Common myeloid progenitor, CD34-positive (primary cell): ENCODE measurements at regions of chr7 and their contacts with region 1.

Region 1: DNA sequence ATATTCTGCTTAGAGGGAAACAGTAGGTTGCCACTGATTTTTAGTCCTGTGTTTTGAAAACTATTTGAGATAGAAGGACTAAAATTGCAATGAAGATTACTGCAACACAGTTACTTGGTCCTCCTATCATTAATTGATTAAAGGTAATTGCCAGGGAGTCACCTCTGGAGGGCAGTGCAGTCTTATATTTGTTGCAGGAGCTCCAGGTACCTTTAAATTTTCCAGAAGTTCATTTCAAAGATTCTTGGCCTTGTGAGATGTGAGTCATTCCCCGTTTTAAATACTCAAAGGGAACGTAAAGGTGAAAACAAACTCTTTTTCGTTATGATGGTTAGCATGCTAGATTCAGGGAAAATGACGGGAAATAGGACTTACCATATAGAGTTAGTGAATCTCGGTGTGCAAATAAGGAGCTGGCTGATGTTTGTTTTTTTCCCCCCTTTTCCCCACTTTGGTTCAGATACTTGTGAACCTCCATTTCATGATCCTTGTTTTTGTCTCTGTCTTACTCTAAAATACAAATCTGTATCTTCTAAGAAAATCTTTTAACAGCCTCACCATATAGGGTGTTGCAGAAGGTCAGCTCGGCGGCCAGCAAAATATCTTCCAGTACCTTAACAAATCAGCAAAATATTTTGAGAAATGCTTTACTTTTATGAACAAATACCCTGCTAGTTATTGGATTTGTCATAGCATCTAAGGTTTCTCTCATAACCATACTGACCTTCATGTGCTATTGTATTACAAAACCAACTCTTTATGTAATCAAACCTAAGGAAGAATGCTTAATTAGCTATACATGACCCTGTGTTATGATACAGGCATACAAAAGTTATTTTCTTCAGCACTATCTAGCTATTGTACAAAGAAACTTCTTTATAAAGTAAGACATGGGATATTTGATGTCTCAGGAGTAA is 143.0 kb upstream of the HDAC9 start:
- DNase-seq: peak; percentile 62 to 79 (median 72)
- H3K4me3 ChIP-seq: no peak overlapping the region
- H3K27ac ChIP-seq: no peak overlapping the region
- H3K4me1 ChIP-seq: peaks cover 0 to 14% (median 1%) of the 10 kb centered on the region in 4 experiments
- H3K27me3 ChIP-seq: no peaks in the 10 kb centered on the region

Region 2: DNA sequence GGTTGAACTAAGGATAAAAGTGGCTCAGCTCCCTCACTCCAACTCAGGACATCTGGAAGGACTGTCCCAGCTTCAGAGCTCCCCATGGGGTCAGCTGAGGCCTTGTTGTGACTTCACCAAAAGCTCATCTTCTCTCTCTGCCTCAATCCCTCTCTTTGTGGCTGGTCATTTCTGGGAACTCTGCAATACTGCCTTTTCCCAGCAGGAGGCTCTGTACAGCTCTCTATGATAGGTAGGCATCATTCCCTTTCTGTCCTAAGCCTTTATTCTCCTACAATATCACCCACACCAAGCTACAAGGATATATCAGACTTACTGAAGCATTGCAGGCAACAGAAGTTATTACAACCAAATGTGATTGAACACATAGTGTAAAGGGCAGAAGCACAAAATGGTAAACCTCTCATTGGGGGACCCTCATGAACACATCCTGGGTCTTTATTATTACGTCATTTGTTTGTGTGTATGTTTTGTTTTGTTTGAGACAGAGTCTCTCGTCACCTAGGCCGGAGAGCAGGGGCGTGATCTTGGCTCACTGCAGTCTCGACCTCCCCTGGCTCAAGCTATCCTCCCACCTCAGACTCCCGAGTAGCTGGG is 288.3 kb before region 1 on chr7:
- CTCF ChIA-PET with region 1: interaction called, 11 read pairs
- POLR2A ChIA-PET with region 1: no interaction called
- DNase-seq: peak; percentile 21 to 34 (median 22)
- H3K4me3 ChIP-seq: no peak overlapping the region
- H3K27ac ChIP-seq: no peak overlapping the region
- H3K4me1 ChIP-seq: no peaks in the 10 kb centered on the region
- H3K27me3 ChIP-seq: no peaks in the 10 kb centered on the region

Region 3: DNA sequence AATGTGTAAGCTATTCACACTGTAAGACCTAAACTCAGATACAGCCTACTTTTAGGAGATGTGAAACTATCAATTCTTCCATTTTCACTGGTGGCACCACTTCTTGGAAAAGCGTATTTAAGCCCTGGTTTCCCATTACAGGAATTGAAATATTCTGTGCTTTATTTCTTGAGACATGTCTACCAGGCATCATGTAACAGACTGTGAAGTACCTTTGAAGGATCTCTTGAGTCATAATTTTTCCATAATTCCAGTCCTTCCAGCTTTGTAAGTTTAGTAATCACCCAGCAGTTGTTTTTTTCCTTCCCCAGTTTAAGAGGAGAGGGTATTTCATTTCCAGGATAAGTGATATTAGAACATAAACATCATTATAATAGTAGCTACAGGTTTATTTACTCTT is 138.9 kb before region 1 on chr7:
- CTCF ChIA-PET with region 1: interaction called, 33 read pairs
- POLR2A ChIA-PET with region 1: interaction called, 3 read pairs
- DNase-seq: no peak
- H3K4me3 ChIP-seq: no peak overlapping the region
- H3K27ac ChIP-seq: no peak overlapping the region
- H3K4me1 ChIP-seq: no peaks in the 10 kb centered on the region
- H3K27me3 ChIP-seq: no peaks in the 10 kb centered on the region

Region 4: GRCh38 chr7:18370633-18371032 is 18.0 kb after region 1 on chr7:
- CTCF ChIA-PET with region 1: interaction called, 12 read pairs
- POLR2A ChIA-PET with region 1: no interaction called
- DNase-seq: no peak
- H3K4me3 ChIP-seq: no peak overlapping the region
- H3K27ac ChIP-seq: no peak overlapping the region
- H3K4me1 ChIP-seq: no peaks in the 10 kb centered on the region
- H3K27me3 ChIP-seq: no peaks in the 10 kb centered on the region

Region 5: GRCh38 chr7:18570890-18571478 is 218.4 kb after region 1 on chr7:
- CTCF ChIA-PET with region 1: interaction called, 100 read pairs
- POLR2A ChIA-PET with region 1: no interaction called
- DNase-seq: peak; percentile 22 to 36 (median 28)
- H3K4me3 ChIP-seq: no peak overlapping the region
- H3K27ac ChIP-seq: no peak overlapping the region
- H3K4me1 ChIP-seq: no peaks in the 10 kb centered on the region
- H3K27me3 ChIP-seq: no peaks in the 10 kb centered on the region

Region 6: GRCh38 chr7:18590744-18591340 is 238.2 kb after region 1 on chr7:
- CTCF ChIA-PET with region 1: interaction called, 19 read pairs
- POLR2A ChIA-PET with region 1: no interaction called
- DNase-seq: peak; percentile 30 to 58 (median 53)
- H3K4me3 ChIP-seq: no peak overlapping the region
- H3K27ac ChIP-seq: no peak overlapping the region
- H3K4me1 ChIP-seq: peaks cover 0 to 7% (median 0%) of the 10 kb centered on the region in 4 experiments
- H3K27me3 ChIP-seq: no peaks in the 10 kb centered on the region

Region 7: DNA sequence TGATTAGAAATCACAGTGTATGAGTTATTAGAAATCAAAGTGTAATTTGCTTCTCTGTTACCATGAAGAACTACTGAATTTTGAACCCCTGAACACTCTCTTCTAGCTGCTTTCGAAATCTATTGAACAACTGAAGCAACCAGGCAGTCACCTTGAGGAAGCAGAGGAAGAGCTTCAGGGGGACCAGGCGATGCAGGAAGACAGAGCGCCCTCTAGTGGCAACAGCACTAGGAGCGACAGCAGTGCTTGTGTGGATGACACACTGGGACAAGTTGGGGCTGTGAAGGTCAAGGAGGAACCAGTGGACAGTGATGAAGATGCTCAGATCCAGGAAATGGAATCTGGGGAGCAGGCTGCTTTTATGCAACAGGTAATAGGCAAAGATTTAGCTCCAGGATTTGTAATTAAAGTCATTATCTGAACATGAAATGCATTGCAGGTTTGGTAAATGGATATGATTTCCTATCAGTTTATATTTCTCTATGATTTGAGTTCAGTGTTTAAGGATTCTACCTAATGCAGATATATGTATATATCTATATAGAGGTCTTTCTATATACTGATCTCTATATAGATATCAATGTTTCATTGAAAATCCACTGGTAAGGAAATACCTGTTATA is 313.6 kb after region 1 on chr7:
- CTCF ChIA-PET with region 1: interaction called, 27 read pairs
- POLR2A ChIA-PET with region 1: no interaction called
- DNase-seq: peak; percentile 77 to 83 (median 79)
- H3K4me3 ChIP-seq: no peak overlapping the region
- H3K27ac ChIP-seq: no peak overlapping the region
- H3K4me1 ChIP-seq: peaks cover 0 to 12% (median 5%) of the 10 kb centered on the region in 4 experiments
- H3K27me3 ChIP-seq: no peaks in the 10 kb centered on the region